Calu3 (cell line): ENCODE measurements at regions of chr2 and their contacts with region 1.

Region 1: GRCh38 chr2:219104107-219105035 is 43.6 kb upstream of the IHH start:
- DNase-seq: peak; percentile 43
- H3K4me3 Mint-ChIP-seq: no peak overlapping the region
- H3K27ac Mint-ChIP-seq: no peak overlapping the region
- H3K4me1 Mint-ChIP-seq: no peaks in the 10 kb centered on the region
- H3K27me3 Mint-ChIP-seq: no peaks in the 10 kb centered on the region
- CTCF ChIP-seq: peak; percentile 88

Region 2: GRCh38 chr2:219057709-219058540 is 46.4 kb before region 1 on chr2:
- CTCF ChIA-PET with region 1: interaction called, 39 read pairs
- intact Hi-C with region 1: loop called (anchors 5 kb)
- DNase-seq: peak; percentile 93
- H3K4me3 Mint-ChIP-seq: peak overlapping the region; percentile 76
- H3K27ac Mint-ChIP-seq: no peak overlapping the region
- H3K4me1 Mint-ChIP-seq: peaks cover 36% of the 10 kb centered on the region
- H3K27me3 Mint-ChIP-seq: peaks cover 22% of the 10 kb centered on the region
- CTCF ChIP-seq: peak; percentile 91

Region 3: GRCh38 chr2:219073413-219074129 is 30.8 kb before region 1 on chr2:
- CTCF ChIA-PET with region 1: interaction called, 17 read pairs
- intact Hi-C with region 1: no loop called
- DNase-seq: peak; percentile 58
- H3K4me3 Mint-ChIP-seq: no peak overlapping the region
- H3K27ac Mint-ChIP-seq: no peak overlapping the region
- H3K4me1 Mint-ChIP-seq: peaks cover 24% of the 10 kb centered on the region
- H3K27me3 Mint-ChIP-seq: no peaks in the 10 kb centered on the region
- CTCF ChIP-seq: peak; percentile 77

Region 4: GRCh38 chr2:219081701-219082331 is 22.6 kb before region 1 on chr2:
- CTCF ChIA-PET with region 1: interaction called, 16 read pairs
- intact Hi-C with region 1: no loop called
- DNase-seq: no peak
- H3K4me3 Mint-ChIP-seq: no peak overlapping the region
- H3K27ac Mint-ChIP-seq: no peak overlapping the region
- H3K4me1 Mint-ChIP-seq: peaks cover 27% of the 10 kb centered on the region
- H3K27me3 Mint-ChIP-seq: no peaks in the 10 kb centered on the region
- CTCF ChIP-seq: no peak